ENCODE measurements at regions of chr1 and their contacts with region 1.

Region 1: DNA sequence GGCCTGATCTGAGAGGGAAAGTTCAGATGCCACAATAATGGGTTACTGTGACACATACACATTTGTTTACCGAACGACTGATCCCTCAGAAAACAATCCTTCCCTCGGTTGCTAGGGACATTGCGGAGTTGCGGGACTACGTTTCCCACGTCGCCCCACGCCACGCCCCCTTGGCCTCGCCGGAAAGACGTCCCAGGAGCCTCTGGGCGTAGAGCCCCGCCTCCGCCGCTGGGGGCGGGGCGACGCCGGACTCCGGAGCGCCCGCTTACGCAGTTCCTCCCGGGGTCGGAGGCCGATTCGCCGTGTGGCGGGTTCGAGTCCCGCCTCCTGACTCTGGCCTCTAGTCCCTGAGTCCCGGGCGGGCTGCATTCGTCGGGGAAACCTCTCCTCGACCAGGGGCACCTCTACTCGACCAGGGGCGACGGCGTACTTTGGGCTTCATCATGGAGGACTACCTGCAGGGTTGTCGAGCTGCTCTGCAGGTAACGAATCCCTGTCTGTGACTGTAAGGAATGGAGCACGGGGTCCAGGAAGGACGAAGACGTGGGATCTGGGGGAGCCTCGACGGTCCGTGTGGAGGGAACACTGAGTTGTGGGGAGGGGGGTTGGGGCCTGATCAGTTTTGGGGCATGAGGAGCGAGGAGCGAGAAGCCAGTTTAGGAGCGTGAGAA is at the start of gene PRUNE1:
- DNase-seq: peak; percentile 91
- ATAC-seq: peak; percentile 94
- H3K4me3 Mint-ChIP-seq: peak within 1 kb of the TSS; percentile 98
- H3K27ac Mint-ChIP-seq: peak within 1 kb of the TSS; percentile 93
- H3K4me1 Mint-ChIP-seq: peaks cover 66% of the 10 kb centered on the region
- H3K27me3 Mint-ChIP-seq: no peaks in the 10 kb centered on the region
- CTCF ChIP-seq: no peak
- total RNA-seq, gene PRUNE1: 12.9 and 14.2 TPM in 2 replicates

Region 2: GRCh38 chr1:150765296-150765976 is 242.9 kb before region 1 on chr1 and contains the start of gene CTSS:
- CTCF ChIA-PET with region 1: no interaction called
- POLR2A ChIA-PET with region 1: no interaction called
- intact Hi-C with region 1: no loop called
- DNase-seq: no peak
- ATAC-seq: peak; percentile 88
- H3K4me3 Mint-ChIP-seq: peak within 1 kb of the TSS; percentile 93
- H3K27ac Mint-ChIP-seq: peak within 1 kb of the TSS; percentile 97
- H3K4me1 Mint-ChIP-seq: peaks cover 55% of the 10 kb centered on the region
- H3K27me3 Mint-ChIP-seq: no peaks in the 10 kb centered on the region
- CTCF ChIP-seq: no peak
- total RNA-seq, gene CTSS: 162 and 165 TPM in 2 replicates

Region 3: DNA sequence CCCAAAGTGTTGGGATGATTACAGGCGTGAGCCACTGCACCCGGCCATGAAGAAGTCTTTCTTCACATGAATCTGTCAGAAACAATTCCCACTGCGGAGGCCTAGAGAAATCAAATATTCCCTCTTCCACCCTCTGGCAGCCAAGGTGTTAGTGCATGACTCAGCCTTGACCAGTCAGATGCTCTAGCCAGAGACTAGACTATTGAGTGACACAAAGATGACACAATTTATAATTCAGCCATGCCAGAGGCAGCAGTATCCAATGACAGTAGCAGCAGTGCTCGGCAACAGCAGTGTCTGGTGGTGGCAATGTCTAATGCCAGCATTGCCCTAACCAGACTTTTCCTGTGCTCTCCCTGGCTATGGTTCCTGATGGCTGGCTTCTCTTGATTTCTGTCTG is 112.7 kb before region 1 on chr1:
- CTCF ChIA-PET with region 1: no interaction called
- POLR2A ChIA-PET with region 1: no interaction called
- intact Hi-C with region 1: no loop called
- DNase-seq: no peak
- ATAC-seq: no peak
- H3K4me3 Mint-ChIP-seq: no peak overlapping the region
- H3K27ac Mint-ChIP-seq: no peak overlapping the region
- H3K4me1 Mint-ChIP-seq: peaks cover 10% of the 10 kb centered on the region
- H3K27me3 Mint-ChIP-seq: no peaks in the 10 kb centered on the region
- CTCF ChIP-seq: no peak

Region 4: GRCh38 chr1:150906341-150906740 is 102.0 kb before region 1 on chr1:
- CTCF ChIA-PET with region 1: no interaction called
- POLR2A ChIA-PET with region 1: no interaction called
- intact Hi-C with region 1: no loop called
- DNase-seq: no peak
- ATAC-seq: no peak
- H3K4me3 Mint-ChIP-seq: no peak overlapping the region
- H3K27ac Mint-ChIP-seq: no peak overlapping the region
- H3K4me1 Mint-ChIP-seq: peaks cover 8% of the 10 kb centered on the region
- H3K27me3 Mint-ChIP-seq: no peaks in the 10 kb centered on the region
- CTCF ChIP-seq: no peak

Region 5: GRCh38 chr1:150979092-150980056 is 29.0 kb before region 1 on chr1:
- CTCF ChIA-PET with region 1: interaction called, 12 read pairs
- POLR2A ChIA-PET with region 1: interaction called, 8 read pairs
- intact Hi-C with region 1: loop called (anchors 1 kb)
- DNase-seq: peak; percentile 72
- ATAC-seq: peak; percentile 59
- H3K4me3 Mint-ChIP-seq: peak overlapping the region; percentile 69
- H3K27ac Mint-ChIP-seq: peak overlapping the region; percentile 57
- H3K4me1 Mint-ChIP-seq: peaks cover 35% of the 10 kb centered on the region
- H3K27me3 Mint-ChIP-seq: no peaks in the 10 kb centered on the region
- CTCF ChIP-seq: peak; percentile 100

Region 6: DNA sequence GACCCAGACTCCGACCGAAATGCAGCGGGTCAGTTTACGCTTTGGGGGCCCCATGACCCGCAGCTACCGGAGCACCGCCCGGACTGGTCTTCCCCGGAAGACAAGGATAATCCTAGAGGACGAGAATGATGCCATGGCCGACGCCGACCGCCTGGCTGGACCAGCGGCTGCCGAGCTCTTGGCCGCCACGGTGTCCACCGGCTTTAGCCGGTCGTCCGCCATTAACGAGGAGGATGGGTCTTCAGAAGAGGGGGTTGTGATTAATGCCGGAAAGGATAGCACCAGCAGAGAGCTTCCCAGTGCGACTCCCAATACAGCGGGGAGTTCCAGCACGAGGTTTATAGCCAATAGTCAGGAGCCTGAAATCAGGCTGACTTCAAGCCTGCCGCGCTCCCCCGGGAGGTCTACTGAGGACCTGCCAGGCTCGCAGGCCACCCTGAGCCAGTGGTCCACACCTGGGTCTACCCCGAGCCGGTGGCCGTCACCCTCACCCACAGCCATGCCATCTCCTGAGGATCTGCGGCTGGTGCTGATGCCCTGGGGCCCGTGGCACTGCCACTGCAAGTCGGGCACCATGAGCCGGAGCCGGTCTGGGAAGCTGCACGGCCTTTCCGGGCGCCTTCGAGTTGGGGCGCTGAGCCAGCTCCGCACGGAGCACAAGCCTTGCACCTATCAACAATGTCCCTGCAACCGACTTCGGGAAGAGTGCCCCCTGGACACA is 39.8 kb after region 1 on chr1:
- CTCF ChIA-PET with region 1: no interaction called
- POLR2A ChIA-PET with region 1: interaction called, 5 read pairs
- intact Hi-C with region 1: loop called (anchors 2 kb)
- DNase-seq: peak; percentile 58
- ATAC-seq: peak; percentile 74
- H3K4me3 Mint-ChIP-seq: peak overlapping the region; percentile 94
- H3K27ac Mint-ChIP-seq: peak overlapping the region; percentile 89
- H3K4me1 Mint-ChIP-seq: peaks cover 42% of the 10 kb centered on the region
- H3K27me3 Mint-ChIP-seq: no peaks in the 10 kb centered on the region
- CTCF ChIP-seq: no peak

Region 7: GRCh38 chr1:151156515-151156819 is 148.1 kb after region 1 on chr1 and contains the start of gene TNFAIP8L2:
- CTCF ChIA-PET with region 1: no interaction called
- POLR2A ChIA-PET with region 1: interaction called, 4 read pairs
- intact Hi-C with region 1: loop called (anchors 5 kb)
- DNase-seq: peak; percentile 58
- ATAC-seq: peak; percentile 88
- H3K4me3 Mint-ChIP-seq: peak within 1 kb of the TSS; percentile 96
- H3K27ac Mint-ChIP-seq: peak within 1 kb of the TSS; percentile 95
- H3K4me1 Mint-ChIP-seq: peaks cover 44% of the 10 kb centered on the region
- H3K27me3 Mint-ChIP-seq: no peaks in the 10 kb centered on the region
- CTCF ChIP-seq: no peak
- total RNA-seq, gene TNFAIP8L2: 8.5 and 9.3 TPM in 2 replicates